ENCODE measurements at regions of chr17 and their contacts with region 1.

Region 1: DNA sequence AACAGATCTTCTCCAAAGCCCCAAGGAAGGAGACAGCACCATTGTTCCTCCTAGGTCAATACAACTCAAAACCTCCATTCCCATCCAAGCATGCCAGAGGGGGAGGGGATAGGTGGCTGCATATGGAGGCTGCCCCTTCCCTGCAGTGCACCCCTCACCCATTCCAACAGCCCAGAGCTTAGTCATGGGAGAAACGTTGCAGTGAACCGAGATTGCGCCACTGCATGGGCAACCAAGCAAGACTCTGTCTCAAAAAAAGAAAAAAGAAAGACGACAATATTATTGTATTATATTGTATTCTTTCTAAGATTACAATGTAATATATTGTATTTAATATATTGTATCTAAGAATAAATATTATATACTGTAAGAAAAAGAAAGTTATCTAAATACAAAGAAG is 36.4 kb upstream of the CD300E start:
- DNase-seq: no peak

Region 2: DNA sequence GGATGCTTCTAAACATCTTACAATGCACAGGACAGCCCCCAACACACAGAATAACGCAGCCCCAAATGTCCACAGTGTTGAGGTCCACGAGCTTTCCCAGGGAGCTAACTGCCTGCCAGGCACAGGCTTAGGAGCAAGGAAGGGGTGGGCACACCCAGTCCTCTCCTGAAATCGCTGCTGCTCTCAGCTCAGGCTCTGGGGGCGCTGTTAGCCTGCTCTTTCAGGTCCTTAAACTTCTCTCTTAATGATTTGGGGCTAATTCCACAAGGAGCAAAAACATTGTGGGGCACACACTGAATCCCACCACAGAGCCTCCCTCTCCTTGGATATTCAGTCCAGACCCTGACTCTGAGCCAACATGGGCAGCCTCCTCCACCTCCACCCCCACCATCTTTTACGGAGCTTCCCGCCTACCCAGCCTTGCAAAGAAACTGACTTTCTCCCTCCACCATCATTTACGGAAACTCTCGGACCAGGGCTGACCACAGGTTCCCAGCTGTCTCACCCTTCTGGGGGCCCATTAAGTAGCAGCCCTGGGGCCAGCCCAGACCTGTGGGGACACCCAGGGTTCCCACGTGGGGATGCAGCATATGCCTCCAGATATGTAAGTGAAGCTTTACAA is 93.7 kb before region 1 on chr17:
- intact Hi-C with region 1: no loop called
- DNase-seq: no peak

Region 3: GRCh38 chr17:74852237-74853047 is 192.5 kb after region 1 on chr17:
- intact Hi-C with region 1: loop called in 1 of 2 experiments (anchors 10 kb)
- DNase-seq: no peak